CD14-positive monocyte (primary cell): ENCODE measurements at regions of chr3 and their contacts with region 1.

Region 1: GRCh38 chr3:53709860-53710674 is 136.2 kb downstream of the CHDH start:
- DNase-seq: peak; percentile 65 to 74 (median 67)
- H3K4me3 ChIP-seq: no peak overlapping the region
- H3K4me3 Mint-ChIP-seq: peak overlapping the region in 1 of 2 donors; percentile 16
- H3K27ac ChIP-seq: no peak overlapping the region
- H3K27ac Mint-ChIP-seq: no peak overlapping the region
- H3K4me1 ChIP-seq: peaks cover 8 to 13% of the 10 kb centered on the region in 2 donors
- H3K4me1 Mint-ChIP-seq: peaks cover 13% of the 10 kb centered on the region
- H3K27me3 ChIP-seq: no peaks in the 10 kb centered on the region
- H3K27me3 Mint-ChIP-seq: peaks cover 4 to 12% (median 6%) of the 10 kb centered on the region in 3 donors
- CTCF ChIP-seq: peak; percentile 81

Region 2: DNA sequence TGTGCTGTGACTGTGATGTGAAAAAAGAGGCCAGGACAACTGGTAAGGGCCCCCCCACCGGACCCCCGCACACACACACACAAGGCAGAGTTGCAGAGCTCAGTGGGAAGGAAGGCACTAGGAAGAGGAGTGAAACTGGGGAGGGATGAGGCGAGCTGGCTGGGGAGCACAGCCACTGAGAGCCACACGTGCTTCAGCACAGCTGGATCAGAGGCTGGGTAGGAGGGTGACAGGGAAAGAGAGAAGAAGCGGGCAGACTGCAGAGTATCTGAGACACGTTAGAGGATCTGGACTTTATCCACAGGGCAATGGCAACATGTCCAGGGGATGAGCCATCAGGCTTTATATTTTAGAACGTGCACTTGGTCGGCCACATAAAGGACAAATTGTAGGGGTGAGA is 416.2 kb before region 1 on chr3:
- intact Hi-C with region 1: loop called in 1 of 2 experiments (anchors 10 kb)
- DNase-seq: no peak
- H3K4me3 ChIP-seq: no peak overlapping the region
- H3K4me3 Mint-ChIP-seq: peak overlapping the region in 1 of 2 donors; percentile 13
- H3K27ac ChIP-seq: peak overlapping the region in 1 of 2 donors; percentile 34
- H3K27ac Mint-ChIP-seq: peak overlapping the region in 2 of 7 donors; percentile 13 to 54
- H3K4me1 ChIP-seq: no peaks in the 10 kb centered on the region
- H3K4me1 Mint-ChIP-seq: no peaks in the 10 kb centered on the region
- H3K27me3 ChIP-seq: no peaks in the 10 kb centered on the region
- H3K27me3 Mint-ChIP-seq: no peaks in the 10 kb centered on the region
- CTCF ChIP-seq: no peak

Region 3: GRCh38 chr3:53303957-53304356 is 406.1 kb before region 1 on chr3:
- intact Hi-C with region 1: loop called (anchors 10 kb)
- DNase-seq: no peak
- H3K4me3 ChIP-seq: no peak overlapping the region
- H3K4me3 Mint-ChIP-seq: no peak overlapping the region
- H3K27ac ChIP-seq: no peak overlapping the region
- H3K27ac Mint-ChIP-seq: peak overlapping the region in 2 of 7 donors; percentile 32 to 77
- H3K4me1 ChIP-seq: no peaks in the 10 kb centered on the region
- H3K4me1 Mint-ChIP-seq: peaks cover 6% of the 10 kb centered on the region
- H3K27me3 ChIP-seq: no peaks in the 10 kb centered on the region
- H3K27me3 Mint-ChIP-seq: no peaks in the 10 kb centered on the region
- CTCF ChIP-seq: no peak

Region 4: DNA sequence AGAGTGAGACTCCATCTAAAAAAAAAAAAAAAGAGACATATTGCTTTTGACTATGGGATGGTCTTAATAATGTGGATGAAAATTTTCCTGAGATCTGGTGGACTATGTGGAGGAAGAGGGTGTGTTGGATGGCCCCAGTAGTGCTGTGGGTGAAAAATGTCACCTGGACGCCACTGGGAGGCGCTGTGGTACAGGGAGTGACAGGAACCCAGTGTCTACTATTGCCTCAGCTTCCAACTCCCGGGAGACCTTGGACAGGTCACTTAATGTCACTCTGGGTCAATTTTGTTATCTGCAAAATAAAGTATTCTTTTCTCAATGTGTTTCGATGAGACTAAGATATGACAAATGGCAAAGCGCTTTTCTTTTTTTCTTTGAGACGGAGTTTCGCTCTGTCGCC is 335.0 kb before region 1 on chr3:
- intact Hi-C with region 1: loop called (anchors 2 to 5 kb)
- DNase-seq: peak; percentile 53 to 71 (median 60)
- H3K4me3 ChIP-seq: no peak overlapping the region
- H3K4me3 Mint-ChIP-seq: no peak overlapping the region
- H3K27ac ChIP-seq: no peak overlapping the region
- H3K27ac Mint-ChIP-seq: peak overlapping the region in 1 of 7 donors; percentile 40
- H3K4me1 ChIP-seq: no peaks in the 10 kb centered on the region
- H3K4me1 Mint-ChIP-seq: peaks cover 2% of the 10 kb centered on the region
- H3K27me3 ChIP-seq: peaks cover 2 to 5% of the 10 kb centered on the region in 2 donors
- H3K27me3 Mint-ChIP-seq: peaks cover 4 to 14% (median 9%) of the 10 kb centered on the region in 3 donors
- CTCF ChIP-seq: peak; percentile 96